Activated T-helper 1 cell treated with anti-CD3 and anti-CD28 coated beads, Interleukin-12 subunit alpha, Interleukin-12 subunit beta, Interleukin-2, Interleukin-4 antibody, amounts not matched to agents 30 ng/mL and 10 ng/mL and 1 ng/mL, durations not matched to agents 14 hours and 24 hours and 36 hours (primary cell): ENCODE measurements at regions of chr13 and their contacts with region 1.

Region 1: GRCh38 chr13:97286317-97287046 is 64.3 kb downstream of the MBNL2 start:
- DNase-seq: no peak
- H3K4me3 Mint-ChIP-seq: no peak overlapping the region
- H3K27ac Mint-ChIP-seq: no peak overlapping the region
- H3K4me1 Mint-ChIP-seq: peaks cover 40% of the 10 kb centered on the region
- H3K27me3 Mint-ChIP-seq: peaks cover under 1% of the 10 kb centered on the region

Region 2: GRCh38 chr13:97141564-97142005 is 144.9 kb before region 1 on chr13:
- intact Hi-C with region 1: loop called (anchors 1 kb)
- DNase-seq: no peak
- H3K4me3 Mint-ChIP-seq: no peak overlapping the region
- H3K27ac Mint-ChIP-seq: peak overlapping the region; percentile 7
- H3K4me1 Mint-ChIP-seq: peaks cover 13% of the 10 kb centered on the region
- H3K27me3 Mint-ChIP-seq: peaks cover 10% of the 10 kb centered on the region

Region 3: GRCh38 chr13:97273341-97273831 is 13.1 kb before region 1 on chr13:
- intact Hi-C with region 1: loop called (anchors 2 kb)
- DNase-seq: no peak
- H3K4me3 Mint-ChIP-seq: no peak overlapping the region
- H3K27ac Mint-ChIP-seq: no peak overlapping the region
- H3K4me1 Mint-ChIP-seq: peaks cover 6% of the 10 kb centered on the region
- H3K27me3 Mint-ChIP-seq: no peaks in the 10 kb centered on the region

Region 4: GRCh38 chr13:97333983-97334382 is 47.5 kb after region 1 on chr13:
- intact Hi-C with region 1: no loop called
- DNase-seq: no peak
- H3K4me3 Mint-ChIP-seq: no peak overlapping the region
- H3K27ac Mint-ChIP-seq: no peak overlapping the region
- H3K4me1 Mint-ChIP-seq: no peaks in the 10 kb centered on the region
- H3K27me3 Mint-ChIP-seq: peaks cover 2% of the 10 kb centered on the region